Activated CD4-positive, alpha-beta memory T cell treated with anti-CD3 and anti-CD28 coated beads for 36 hours (primary cell): ENCODE measurements at regions of chr5 and their contacts with region 1.

Region 1: DNA sequence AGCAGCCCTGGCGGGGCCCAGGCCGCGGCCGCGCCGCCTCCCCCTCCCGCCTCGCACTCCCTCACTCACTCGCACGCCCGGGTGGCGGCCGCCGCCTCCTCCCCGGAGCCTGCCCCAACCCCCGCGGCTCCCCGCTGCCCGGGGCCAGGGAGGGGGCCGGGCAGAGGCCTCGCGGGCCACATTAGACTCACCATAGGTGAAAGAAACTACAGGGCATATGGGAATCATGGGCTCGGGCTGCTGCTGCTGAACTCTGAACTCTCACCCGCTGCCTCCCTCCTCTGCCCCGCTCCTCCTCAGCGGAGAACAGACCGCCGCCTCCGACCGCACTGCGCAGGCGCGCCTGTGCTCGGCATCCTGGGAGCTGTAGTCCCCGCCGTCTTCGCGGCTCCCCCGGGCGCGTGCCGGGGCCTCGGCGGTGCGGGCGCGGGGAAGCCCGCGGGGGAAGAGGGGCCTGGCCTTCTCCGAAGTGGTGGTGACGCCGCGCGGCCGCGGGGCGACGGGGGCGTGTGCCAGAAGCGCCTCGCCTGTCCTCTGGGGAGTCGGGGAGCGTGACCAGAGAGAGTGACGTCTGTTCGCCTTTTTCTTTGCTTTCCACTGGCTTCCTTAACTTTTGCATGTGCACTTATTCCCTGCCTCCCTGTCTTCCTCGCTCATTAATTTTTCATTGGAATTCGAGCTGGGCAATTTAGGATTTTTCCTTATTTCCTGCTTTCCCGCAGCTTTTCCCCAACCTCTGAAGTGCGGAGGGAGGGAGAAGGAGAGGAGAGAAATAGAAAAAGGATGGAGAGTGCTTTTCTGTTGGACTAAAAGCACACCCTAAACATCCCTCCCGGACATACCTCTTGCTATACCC is at the start of gene ZFR:
- DNase-seq: peak; percentile 96
- H3K4me3 Mint-ChIP-seq: peak within 1 kb of the TSS; percentile 92
- H3K27ac Mint-ChIP-seq: peak within 1 kb of the TSS; percentile 98
- H3K4me1 Mint-ChIP-seq: peaks cover 38% of the 10 kb centered on the region
- H3K27me3 Mint-ChIP-seq: no peaks in the 10 kb centered on the region
- total RNA-seq, gene ZFR: 58.1 to 61.1 TPM

Region 2: DNA sequence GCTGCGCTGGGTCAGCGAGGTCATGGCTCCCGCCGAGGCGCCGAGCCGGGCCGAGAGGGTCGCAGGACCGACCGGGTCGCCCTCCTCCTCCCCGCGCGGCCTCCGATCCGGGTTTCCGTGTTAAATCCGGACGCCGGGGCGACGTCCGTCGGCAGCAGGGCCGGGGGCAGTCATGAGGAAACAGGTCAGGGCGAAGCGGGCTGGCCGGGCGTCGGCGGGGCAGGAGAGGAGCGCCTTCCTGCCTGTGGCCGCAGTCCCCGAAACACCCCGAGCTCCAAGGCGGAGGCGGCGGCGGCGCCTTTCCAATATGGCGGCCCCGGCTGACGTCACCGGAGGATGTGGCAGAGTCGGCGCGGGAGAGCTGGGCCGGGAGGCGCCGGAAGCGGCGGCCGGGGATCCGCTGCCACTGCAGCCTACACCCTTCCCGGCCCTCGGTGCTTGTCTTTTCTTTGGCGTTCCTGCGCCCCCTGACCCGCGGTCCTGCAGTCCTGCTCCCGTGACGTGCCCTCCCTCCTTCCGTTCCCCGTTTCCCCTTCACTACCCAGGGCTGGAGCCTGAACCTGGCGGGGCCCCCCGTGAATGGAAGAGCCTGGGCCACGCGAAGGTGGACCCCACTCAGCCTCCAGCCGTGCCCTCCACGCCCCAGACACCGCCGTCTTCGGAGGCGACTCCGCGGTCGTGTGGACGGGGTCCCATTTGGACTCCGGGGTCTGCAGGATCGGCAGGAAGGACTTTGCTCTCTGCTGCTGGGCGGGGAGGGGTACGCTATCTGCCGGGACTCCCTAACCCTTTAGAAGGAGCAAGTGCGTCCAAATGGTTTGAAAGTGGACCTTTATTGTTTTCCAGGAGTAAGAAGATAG is 270.4 kb before region 1 on chr5 and contains the start of gene GOLPH3:
- CTCF ChIA-PET with region 1: interaction called, 3 read pairs
- POLR2A ChIA-PET with region 1: no interaction called
- intact Hi-C with region 1: loop called (anchors 1 kb)
- DNase-seq: peak; percentile 96
- H3K4me3 Mint-ChIP-seq: peak within 1 kb of the TSS; percentile 99
- H3K27ac Mint-ChIP-seq: peak within 1 kb of the TSS; percentile 98
- H3K4me1 Mint-ChIP-seq: peaks cover 34% of the 10 kb centered on the region
- H3K27me3 Mint-ChIP-seq: peaks cover 4% of the 10 kb centered on the region
- total RNA-seq, gene GOLPH3: 65.6 to 67.1 TPM

Region 3: GRCh38 chr5:32312647-32313523 is 131.8 kb before region 1 on chr5 and contains the start of gene MTMR12:
- CTCF ChIA-PET with region 1: no interaction called
- POLR2A ChIA-PET with region 1: no interaction called
- intact Hi-C with region 1: loop called (anchors 1 kb)
- DNase-seq: peak; percentile 100
- H3K4me3 Mint-ChIP-seq: peak within 1 kb of the TSS; percentile 86
- H3K27ac Mint-ChIP-seq: peak within 1 kb of the TSS; percentile 85
- H3K4me1 Mint-ChIP-seq: peaks cover 22% of the 10 kb centered on the region
- H3K27me3 Mint-ChIP-seq: no peaks in the 10 kb centered on the region
- total RNA-seq, gene MTMR12: 22.3 to 22.4 TPM

Region 4: GRCh38 chr5:32462618-32463017 is 18.0 kb after region 1 on chr5:
- CTCF ChIA-PET with region 1: no interaction called
- POLR2A ChIA-PET with region 1: interaction called, 12 read pairs
- intact Hi-C with region 1: loop called (anchors 1 kb)
- DNase-seq: peak; percentile 80
- H3K4me3 Mint-ChIP-seq: no peak overlapping the region
- H3K27ac Mint-ChIP-seq: peak overlapping the region; percentile 73
- H3K4me1 Mint-ChIP-seq: peaks cover 17% of the 10 kb centered on the region
- H3K27me3 Mint-ChIP-seq: no peaks in the 10 kb centered on the region

Region 5: GRCh38 chr5:32531885-32532520 is 87.3 kb after region 1 on chr5:
- CTCF ChIA-PET with region 1: interaction called, 3 read pairs
- POLR2A ChIA-PET with region 1: interaction called, 9 read pairs
- intact Hi-C with region 1: loop called (anchors 1 kb)
- DNase-seq: peak; percentile 81
- H3K4me3 Mint-ChIP-seq: peak overlapping the region; percentile 91
- H3K27ac Mint-ChIP-seq: peak overlapping the region; percentile 99
- H3K4me1 Mint-ChIP-seq: peaks cover 56% of the 10 kb centered on the region
- H3K27me3 Mint-ChIP-seq: no peaks in the 10 kb centered on the region